ENCODE measurements at regions of chr19 and their contacts with region 1.

Region 1: GRCh38 chr19:42455621-42456081 is 12.9 kb upstream of the CXCL17 start:
- DNase-seq: no peak
- H3K4me3 ChIP-seq: no peak overlapping the region
- H3K27ac ChIP-seq: no peak overlapping the region
- H3K27me3 ChIP-seq: peaks cover 9% of the 10 kb centered on the region
- CTCF ChIP-seq: no peak

Region 2: GRCh38 chr19:42440357-42441048 is 15.1 kb before region 1 on chr19:
- CTCF ChIA-PET with region 1: interaction called, 25 read pairs
- POLR2A ChIA-PET with region 1: no interaction called
- DNase-seq: peak; percentile 26
- H3K4me3 ChIP-seq: no peak overlapping the region
- H3K27ac ChIP-seq: no peak overlapping the region
- H3K27me3 ChIP-seq: peaks cover 29% of the 10 kb centered on the region
- CTCF ChIP-seq: peak; percentile 86

Region 3: DNA sequence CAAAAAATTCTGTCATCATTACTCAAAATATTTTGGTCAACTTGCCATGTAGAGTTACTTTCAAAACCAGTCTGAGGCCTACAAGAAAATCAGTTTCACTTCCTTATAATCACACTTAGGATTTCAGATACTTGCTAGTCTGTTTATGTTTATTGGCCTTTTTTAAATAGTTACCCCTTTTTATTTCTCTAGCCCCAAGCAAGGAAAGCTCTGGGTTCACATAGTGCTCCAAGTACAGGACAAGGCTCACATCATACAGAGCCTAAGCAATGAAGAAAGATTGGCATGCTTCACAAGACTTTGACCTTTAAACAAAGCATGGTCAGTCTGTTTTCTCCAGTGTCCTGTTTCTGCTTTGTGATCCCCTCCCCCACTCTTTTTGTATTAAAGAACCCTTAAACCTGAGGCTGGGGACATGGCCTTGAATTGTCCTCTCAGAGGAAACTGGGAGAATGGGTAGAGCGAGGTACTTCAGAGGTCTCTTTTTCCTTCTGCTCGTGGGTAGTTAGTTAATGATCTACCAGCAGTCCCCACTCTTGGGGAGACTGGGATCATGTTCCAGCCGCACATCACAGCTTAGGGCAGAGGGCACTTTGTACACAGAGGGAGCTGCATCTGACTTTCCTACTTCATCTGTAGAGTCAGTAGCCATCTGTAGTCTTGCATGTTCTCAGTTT is 42.0 kb after region 1 on chr19:
- CTCF ChIA-PET with region 1: no interaction called
- POLR2A ChIA-PET with region 1: no interaction called
- DNase-seq: no peak
- H3K4me3 ChIP-seq: no peak overlapping the region
- H3K27ac ChIP-seq: no peak overlapping the region
- H3K27me3 ChIP-seq: peaks cover 15% of the 10 kb centered on the region
- CTCF ChIP-seq: no peak

Region 4: DNA sequence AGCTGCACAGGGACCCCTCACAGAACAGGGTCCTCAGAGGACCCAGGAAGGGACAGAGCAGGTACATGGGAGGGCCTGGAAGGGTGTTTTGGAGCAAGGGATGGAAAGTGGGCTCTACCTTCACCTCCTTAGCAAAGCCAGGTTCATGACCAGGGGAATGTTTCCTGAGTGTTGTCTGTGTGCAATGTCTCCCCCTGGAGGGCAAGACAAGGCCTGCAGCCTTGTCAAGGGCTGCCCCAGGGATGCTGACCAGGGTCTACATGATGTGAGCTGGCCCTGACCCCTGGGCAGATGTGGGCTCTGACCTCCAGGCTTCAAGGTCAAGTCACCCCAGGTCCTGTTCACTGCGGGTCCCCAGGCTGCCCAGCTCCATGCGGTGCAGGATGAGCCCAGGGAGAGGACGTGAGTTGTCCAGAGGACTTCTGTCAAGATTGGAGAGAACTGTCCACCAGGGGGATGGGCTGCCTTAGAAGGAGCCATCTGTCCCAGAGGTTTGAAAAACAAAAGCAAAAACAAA is 73.7 kb after region 1 on chr19:
- CTCF ChIA-PET with region 1: interaction called, 44 read pairs
- POLR2A ChIA-PET with region 1: no interaction called
- DNase-seq: no peak
- H3K4me3 ChIP-seq: no peak overlapping the region
- H3K27ac ChIP-seq: no peak overlapping the region
- H3K27me3 ChIP-seq: peaks cover 16% of the 10 kb centered on the region
- CTCF ChIP-seq: peak; percentile 87